WTC11 (cell line): ENCODE measurements at regions of chr4 and their contacts with region 1.

Region 1: DNA sequence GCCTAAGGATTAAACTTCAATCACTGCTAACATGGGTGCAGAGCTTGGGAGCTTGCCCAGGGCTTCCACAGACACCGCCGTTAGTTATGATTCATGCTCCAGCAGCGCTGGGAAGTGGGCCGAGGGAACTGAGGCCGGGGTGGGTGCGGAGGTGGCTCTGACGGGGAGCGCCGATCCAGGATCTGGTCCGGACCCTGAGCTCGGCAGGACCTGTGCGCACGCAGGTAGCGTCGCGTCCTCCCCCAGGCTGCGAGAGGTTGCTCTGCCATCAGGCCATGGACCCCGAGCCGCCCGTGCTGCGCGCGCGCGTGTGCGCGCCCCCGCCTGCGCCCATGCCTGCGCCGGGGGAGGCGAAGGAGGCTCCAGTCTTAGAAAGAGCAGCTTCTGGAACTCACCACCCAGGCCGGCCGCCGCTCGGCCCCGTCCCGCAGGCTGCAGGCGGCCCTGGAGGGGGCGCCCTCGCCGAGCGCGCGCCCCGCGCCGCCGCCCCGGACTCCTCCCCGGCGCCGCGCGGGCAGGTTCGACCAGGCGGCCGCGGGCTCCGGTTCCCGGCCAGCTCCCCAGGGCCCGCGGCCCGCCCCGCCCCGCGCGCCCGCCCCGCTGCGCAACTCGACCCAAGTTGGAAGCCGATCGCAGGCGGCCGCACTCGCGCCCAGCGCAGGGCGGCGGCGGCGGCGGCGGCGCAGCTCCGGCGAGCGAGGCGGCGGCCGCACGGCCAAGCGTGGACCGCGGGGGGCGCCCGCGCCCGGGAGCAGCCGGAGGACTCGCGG is 729 bp upstream of the ADRA2C start:
- DNase-seq: peak; percentile 70
- ATAC-seq: peak; percentile 71
- H3K4me3 Mint-ChIP-seq: peak overlapping the region; percentile 47
- H3K27ac Mint-ChIP-seq: no peak overlapping the region
- H3K4me1 Mint-ChIP-seq: peaks cover 8% of the 10 kb centered on the region
- H3K27me3 Mint-ChIP-seq: peaks cover 37% of the 10 kb centered on the region
- CTCF ChIP-seq: no peak

Region 2: GRCh38 chr4:3703677-3704521 is 61.6 kb before region 1 on chr4:
- CTCF ChIA-PET with region 1: interaction called, 26 read pairs
- POLR2A ChIA-PET with region 1: no interaction called
- DNase-seq: no peak
- ATAC-seq: peak; percentile 71
- H3K4me3 Mint-ChIP-seq: no peak overlapping the region
- H3K27ac Mint-ChIP-seq: no peak overlapping the region
- H3K4me1 Mint-ChIP-seq: peaks cover 13% of the 10 kb centered on the region
- H3K27me3 Mint-ChIP-seq: no peaks in the 10 kb centered on the region
- CTCF ChIP-seq: no peak

Region 3: GRCh38 chr4:3729188-3729875 is 36.1 kb before region 1 on chr4:
- CTCF ChIA-PET with region 1: interaction called, 11 read pairs
- POLR2A ChIA-PET with region 1: no interaction called
- DNase-seq: no peak
- ATAC-seq: no peak
- H3K4me3 Mint-ChIP-seq: no peak overlapping the region
- H3K27ac Mint-ChIP-seq: no peak overlapping the region
- H3K4me1 Mint-ChIP-seq: peaks cover 27% of the 10 kb centered on the region
- H3K27me3 Mint-ChIP-seq: peaks cover 28% of the 10 kb centered on the region
- CTCF ChIP-seq: no peak

Region 4: DNA sequence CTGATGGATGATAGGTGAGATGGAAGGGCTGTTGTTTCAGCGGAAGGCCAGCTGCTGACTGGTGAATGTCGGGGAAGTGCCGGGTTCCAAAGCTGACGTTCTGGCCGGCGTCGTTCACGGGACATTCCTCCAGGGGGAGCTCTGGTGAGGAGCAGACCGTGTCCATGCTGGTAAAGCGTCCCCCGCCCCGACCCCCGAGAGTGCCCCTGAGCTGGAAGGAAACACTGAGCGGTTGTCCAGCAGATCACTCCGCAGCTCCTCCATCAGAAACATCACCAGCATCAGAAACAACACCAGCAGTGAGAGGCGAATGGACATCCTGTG is 17.9 kb before region 1 on chr4:
- CTCF ChIA-PET with region 1: interaction called, 80 read pairs
- POLR2A ChIA-PET with region 1: interaction called, 5 read pairs
- DNase-seq: peak; percentile 87
- ATAC-seq: peak; percentile 78
- H3K4me3 Mint-ChIP-seq: no peak overlapping the region
- H3K27ac Mint-ChIP-seq: no peak overlapping the region
- H3K4me1 Mint-ChIP-seq: peaks cover 36% of the 10 kb centered on the region
- H3K27me3 Mint-ChIP-seq: peaks cover 13% of the 10 kb centered on the region
- CTCF ChIP-seq: peak; percentile 37; the same call in 1 of the 2 replicates

Region 5: DNA sequence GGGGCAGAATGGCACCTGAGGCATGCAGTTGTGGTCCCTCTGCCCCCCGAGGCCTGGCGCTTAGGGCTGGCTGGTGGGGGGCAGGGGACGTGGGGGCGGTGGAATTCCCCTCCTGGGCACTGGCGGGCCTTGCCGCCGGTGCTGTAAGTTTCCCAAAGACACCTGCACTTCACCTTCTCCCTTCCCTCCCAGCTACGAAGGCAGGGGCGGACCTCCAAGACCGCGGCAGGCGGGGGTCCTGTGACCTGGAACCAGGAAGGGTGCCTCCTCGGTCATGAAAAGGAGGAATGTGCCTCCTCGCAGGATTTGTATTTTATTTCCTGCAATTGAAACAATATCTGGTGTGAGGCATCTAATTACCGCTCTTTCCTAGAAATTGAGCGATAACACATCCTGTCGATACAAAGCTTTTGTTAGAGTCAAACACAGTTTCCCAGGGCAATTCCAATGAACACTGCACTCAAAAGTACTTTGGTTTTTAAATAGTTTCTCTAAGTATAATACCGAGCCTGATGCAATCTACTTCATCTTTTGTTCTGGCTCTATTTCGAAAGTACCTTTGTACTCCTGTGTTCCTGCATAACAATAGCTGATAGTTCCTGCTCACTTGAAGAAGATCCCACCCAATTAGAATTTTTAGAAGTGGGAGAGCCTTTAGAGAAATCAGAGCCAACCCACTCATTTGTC is 11.6 kb before region 1 on chr4:
- CTCF ChIA-PET with region 1: interaction called, 80 read pairs
- POLR2A ChIA-PET with region 1: interaction called, 3 read pairs
- DNase-seq: no peak
- ATAC-seq: peak; percentile 17
- H3K4me3 Mint-ChIP-seq: no peak overlapping the region
- H3K27ac Mint-ChIP-seq: no peak overlapping the region; the same call in 1 of the 2 replicates
- H3K4me1 Mint-ChIP-seq: peaks cover 16% of the 10 kb centered on the region
- H3K27me3 Mint-ChIP-seq: peaks cover 8% of the 10 kb centered on the region
- CTCF ChIP-seq: no peak

Region 6: GRCh38 chr4:3783406-3784306 is 18.2 kb after region 1 on chr4:
- CTCF ChIA-PET with region 1: interaction called, 87 read pairs
- POLR2A ChIA-PET with region 1: interaction called, 3 read pairs
- DNase-seq: peak; percentile 78
- ATAC-seq: peak; percentile 80
- H3K4me3 Mint-ChIP-seq: no peak overlapping the region
- H3K27ac Mint-ChIP-seq: no peak overlapping the region
- H3K4me1 Mint-ChIP-seq: peaks cover 3% of the 10 kb centered on the region
- H3K27me3 Mint-ChIP-seq: no peaks in the 10 kb centered on the region
- CTCF ChIP-seq: peak; percentile 53